ENCODE measurements at regions of chr11 and their contacts with region 1.

Region 1: GRCh38 chr11:75394085-75394840 is 5.1 kb upstream of the RPS3 start:
- DNase-seq: no peak
- H3K4me3 ChIP-seq: no peak overlapping the region
- H3K27ac ChIP-seq: peak overlapping the region in 1 of 59 donors; percentile 21
- H3K27me3 ChIP-seq: no peaks in the 10 kb centered on the region
- CTCF ChIP-seq: no peak

Region 2: GRCh38 chr11:75437966-75438659 is 43.9 kb after region 1 on chr11:
- intact Hi-C with region 1: loop called in 1 of 2 experiments (anchors 5 kb)
- DNase-seq: no peak
- H3K4me3 ChIP-seq: no peak overlapping the region
- H3K27ac ChIP-seq: no peak overlapping the region
- H3K27me3 ChIP-seq: no peaks in the 10 kb centered on the region
- CTCF ChIP-seq: no peak

Measured in dorsolateral prefrontal cortex (tissue), 120 donors.